MCF 10A (cell line): ENCODE measurements at regions of chr15 and their contacts with region 1.

Region 1: GRCh38 chr15:56245871-56246814 is 2.5 kb upstream of the RFX7 start:
- DNase-seq: peak; percentile 90
- H3K4me3 Mint-ChIP-seq: peak overlapping the region; percentile 79
- H3K27ac Mint-ChIP-seq: peak overlapping the region; percentile 32
- H3K4me1 Mint-ChIP-seq: peaks cover 14% of the 10 kb centered on the region
- H3K27me3 Mint-ChIP-seq: no peaks in the 10 kb centered on the region
- CTCF ChIP-seq: peak; percentile 99

Region 2: DNA sequence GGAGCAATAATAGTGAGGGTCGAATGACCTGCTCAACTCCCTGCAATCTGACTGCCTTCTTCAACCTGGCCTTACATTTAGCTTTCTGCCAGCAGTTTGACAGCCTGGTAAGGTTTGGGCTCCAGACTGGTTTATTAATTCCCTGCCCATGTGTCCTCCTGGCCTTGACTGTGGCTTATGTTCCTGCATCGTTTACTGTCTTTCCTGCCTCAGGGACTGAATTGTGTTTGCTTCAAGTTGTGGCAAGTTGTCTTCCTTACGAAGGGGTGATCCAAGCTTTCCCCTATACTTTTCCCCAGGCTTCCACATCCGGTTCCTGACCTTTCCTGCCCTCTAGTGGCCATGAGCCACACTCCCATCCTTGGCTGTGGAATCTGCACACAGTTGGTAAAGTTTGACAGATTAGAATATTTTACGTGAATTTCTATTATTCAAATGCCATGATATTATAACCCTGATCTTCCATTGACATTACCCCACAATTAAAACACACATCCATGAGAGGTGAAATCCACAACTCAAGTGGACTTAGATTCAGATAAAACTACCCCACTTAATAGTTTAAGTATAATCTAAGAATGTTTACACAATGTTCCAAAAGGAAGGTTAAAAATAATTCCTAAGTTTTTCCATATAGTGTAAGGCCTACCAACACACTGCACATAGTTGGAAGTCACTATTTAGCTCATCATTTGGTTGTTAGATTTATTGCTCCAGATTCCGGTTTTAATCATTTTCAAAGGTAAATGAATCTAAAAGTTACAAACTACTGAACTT is 348.4 kb before region 1 on chr15:
- CTCF ChIA-PET with region 1: interaction called, 5 read pairs
- POLR2A ChIA-PET with region 1: interaction called, 3 read pairs
- intact Hi-C with region 1: loop called (anchors 5 kb)
- DNase-seq: peak; percentile 87
- H3K4me3 Mint-ChIP-seq: peak overlapping the region; percentile 45
- H3K27ac Mint-ChIP-seq: peak overlapping the region; percentile 92
- H3K4me1 Mint-ChIP-seq: peaks cover 21% of the 10 kb centered on the region
- H3K27me3 Mint-ChIP-seq: no peaks in the 10 kb centered on the region
- CTCF ChIP-seq: peak; percentile 73

Region 3: GRCh38 chr15:55993111-55993803 is 252.9 kb before region 1 on chr15 and contains the start of gene NEDD4:
- CTCF ChIA-PET with region 1: interaction called, 6 read pairs
- POLR2A ChIA-PET with region 1: interaction called, 9 read pairs
- intact Hi-C with region 1: loop called (anchors 2 kb)
- DNase-seq: peak; percentile 90
- H3K4me3 Mint-ChIP-seq: peak within 1 kb of the TSS; percentile 83
- H3K27ac Mint-ChIP-seq: peak within 1 kb of the TSS; percentile 72
- H3K4me1 Mint-ChIP-seq: peaks cover 37% of the 10 kb centered on the region
- H3K27me3 Mint-ChIP-seq: no peaks in the 10 kb centered on the region
- CTCF ChIP-seq: peak; percentile 44
- total RNA-seq, gene NEDD4: 57.7 and 60.3 TPM in 2 replicates

Region 4: GRCh38 chr15:56098195-56098863 is 147.8 kb before region 1 on chr15:
- CTCF ChIA-PET with region 1: interaction called, 3 read pairs
- POLR2A ChIA-PET with region 1: no interaction called
- intact Hi-C with region 1: loop called (anchors 2 kb)
- DNase-seq: no peak
- H3K4me3 Mint-ChIP-seq: no peak overlapping the region
- H3K27ac Mint-ChIP-seq: no peak overlapping the region
- H3K4me1 Mint-ChIP-seq: peaks cover 6% of the 10 kb centered on the region
- H3K27me3 Mint-ChIP-seq: no peaks in the 10 kb centered on the region
- CTCF ChIP-seq: no peak

Region 5: DNA sequence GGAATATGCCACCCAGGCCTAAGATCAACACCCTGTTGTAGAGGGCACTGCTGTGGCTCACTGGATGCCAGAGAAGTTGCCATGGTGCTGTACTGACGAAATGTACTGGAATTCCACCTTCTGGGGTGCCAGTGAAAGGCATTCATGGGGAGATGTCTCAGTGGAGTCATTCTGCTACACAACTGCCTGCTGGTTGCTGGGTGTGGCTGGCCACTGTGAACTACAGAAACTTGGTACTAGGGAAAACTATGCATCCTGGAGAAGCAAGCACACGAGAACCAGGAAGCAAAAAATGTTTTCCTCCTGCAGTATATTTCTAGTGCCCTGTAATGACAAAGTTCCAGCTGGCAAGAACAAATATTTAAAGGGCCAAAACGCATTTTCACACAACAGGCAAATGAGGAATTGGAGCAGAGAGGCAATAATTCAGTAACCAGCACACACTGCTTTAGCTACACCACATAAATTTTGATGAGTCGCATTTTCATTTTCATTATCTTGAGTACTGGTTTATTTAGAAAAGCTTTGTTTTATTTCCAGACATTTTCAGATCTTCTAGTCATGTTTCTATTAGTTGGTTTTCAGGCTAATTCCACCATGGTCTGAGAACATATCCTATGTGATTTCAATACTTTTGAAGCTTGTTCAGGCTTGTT is 15.8 kb after region 1 on chr15:
- CTCF ChIA-PET with region 1: interaction called, 11 read pairs
- POLR2A ChIA-PET with region 1: interaction called, 4 read pairs
- intact Hi-C with region 1: no loop called
- DNase-seq: peak; percentile 24
- H3K4me3 Mint-ChIP-seq: peak overlapping the region; percentile 45
- H3K27ac Mint-ChIP-seq: peak overlapping the region; percentile 77
- H3K4me1 Mint-ChIP-seq: peaks cover 13% of the 10 kb centered on the region
- H3K27me3 Mint-ChIP-seq: no peaks in the 10 kb centered on the region
- CTCF ChIP-seq: no peak

Region 6: GRCh38 chr15:56342653-56343052 is 96.5 kb after region 1 on chr15:
- CTCF ChIA-PET with region 1: interaction called, 10 read pairs
- POLR2A ChIA-PET with region 1: interaction called, 25 read pairs
- intact Hi-C with region 1: no loop called
- DNase-seq: peak; percentile 70
- H3K4me3 Mint-ChIP-seq: no peak overlapping the region
- H3K27ac Mint-ChIP-seq: peak overlapping the region; percentile 10
- H3K4me1 Mint-ChIP-seq: peaks cover 35% of the 10 kb centered on the region
- H3K27me3 Mint-ChIP-seq: no peaks in the 10 kb centered on the region
- CTCF ChIP-seq: no peak

Region 7: GRCh38 chr15:56371495-56372147 is 125.5 kb after region 1 on chr15:
- CTCF ChIA-PET with region 1: interaction called, 17 read pairs
- POLR2A ChIA-PET with region 1: interaction called, 46 read pairs
- intact Hi-C with region 1: no loop called
- DNase-seq: peak; percentile 25
- H3K4me3 Mint-ChIP-seq: peak overlapping the region; percentile 51
- H3K27ac Mint-ChIP-seq: peak overlapping the region; percentile 70
- H3K4me1 Mint-ChIP-seq: peaks cover 35% of the 10 kb centered on the region
- H3K27me3 Mint-ChIP-seq: no peaks in the 10 kb centered on the region
- CTCF ChIP-seq: no peak